ENCODE measurements at regions of chr12 and their contacts with region 1.

Region 1: DNA sequence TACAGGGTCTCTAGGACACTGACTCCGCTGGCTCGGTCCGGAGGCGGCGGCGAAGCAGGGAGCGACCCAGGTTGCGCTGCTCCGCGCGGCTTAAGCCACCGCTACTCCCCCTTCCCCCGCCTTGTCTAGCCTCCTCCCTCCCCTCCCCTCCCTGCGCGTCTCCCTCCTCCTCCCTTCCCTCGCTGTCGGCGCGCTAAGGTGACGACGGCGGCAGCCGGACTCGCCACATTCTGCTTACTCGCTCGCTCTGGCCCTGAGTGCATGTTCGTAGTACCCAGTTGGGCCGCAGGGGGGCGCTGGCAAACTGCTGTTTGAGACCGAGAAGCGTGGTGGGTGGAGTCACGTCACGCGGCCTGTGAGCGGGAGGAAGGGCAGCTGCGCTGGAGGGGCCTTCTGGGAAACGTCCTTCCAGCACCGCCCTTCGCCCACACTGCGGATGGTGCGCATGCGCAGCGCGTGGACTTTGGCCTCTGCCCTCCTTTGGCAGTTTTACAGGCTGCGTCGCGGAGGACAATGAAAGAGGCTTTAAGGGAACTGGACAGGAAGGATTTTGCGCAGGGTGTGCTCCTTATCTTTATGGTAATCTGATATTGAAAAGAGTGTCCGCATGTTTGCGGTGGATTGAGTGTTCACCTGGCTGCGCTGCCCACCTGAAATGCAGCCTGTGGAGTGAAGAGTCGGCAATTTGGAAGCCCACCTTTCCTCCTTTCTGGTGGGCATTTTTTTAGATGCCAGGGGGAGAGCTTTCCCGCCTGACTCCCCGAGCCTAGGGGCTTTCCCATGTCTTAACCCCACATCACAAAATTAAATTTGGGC is at the start of gene SCAF11:
- DNase-seq: peak; percentile 100
- H3K4me3 ChIP-seq: peak within 1 kb of the TSS; percentile 73 to 79
- H3K27ac ChIP-seq: peak within 1 kb of the TSS; percentile 98 to 99
- H3K4me1 ChIP-seq: peaks cover 7% of the 10 kb centered on the region
- H3K27me3 ChIP-seq: no peaks in the 10 kb centered on the region
- CTCF ChIP-seq: peak; percentile 98 to 100 (median 100)
- POLR2A ChIP-seq: peak; percentile 55
- total RNA-seq, gene SCAF11: 144 to 171 TPM

Region 2: DNA sequence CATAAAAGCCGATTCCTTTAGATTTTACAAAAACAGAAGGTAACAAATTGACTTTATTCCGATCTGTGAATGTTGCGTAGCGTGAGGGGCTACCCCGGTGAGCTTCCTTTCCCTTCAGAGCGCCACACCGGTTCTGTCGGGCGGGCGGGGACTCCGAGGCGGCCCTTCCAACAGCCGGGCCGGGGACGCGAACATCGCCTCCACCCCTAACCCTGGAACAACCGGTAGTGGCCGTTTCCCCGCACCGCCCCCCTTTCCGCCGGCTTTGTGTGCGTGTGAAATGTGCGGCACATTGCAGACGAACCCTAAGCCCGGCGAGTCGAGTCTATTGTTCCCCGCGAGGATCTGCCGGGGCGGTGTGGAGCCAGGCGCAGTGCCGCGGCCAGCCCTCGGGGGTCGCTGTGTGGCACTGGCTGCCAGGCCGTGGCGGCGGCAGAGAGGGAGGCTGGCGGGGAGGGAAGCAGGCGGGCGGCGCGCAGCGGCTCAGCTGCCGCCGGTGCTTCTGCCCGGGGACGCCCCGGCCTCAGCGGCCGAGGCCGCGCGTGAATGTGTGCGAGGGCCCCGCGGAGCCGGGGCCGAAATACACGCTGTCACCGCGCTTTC is 261.9 kb before region 1 on chr12:
- intact Hi-C with region 1: loop called (anchors 2 kb)
- DNase-seq: peak; percentile 94
- H3K4me3 ChIP-seq: peak overlapping the region; percentile 80 to 87
- H3K27ac ChIP-seq: peak overlapping the region; percentile 99 to 100
- H3K4me1 ChIP-seq: no peaks in the 10 kb centered on the region
- H3K27me3 ChIP-seq: no peaks in the 10 kb centered on the region
- CTCF ChIP-seq: peak; percentile 85 to 98 (median 96)
- POLR2A ChIP-seq: peak; percentile 83

Region 3: DNA sequence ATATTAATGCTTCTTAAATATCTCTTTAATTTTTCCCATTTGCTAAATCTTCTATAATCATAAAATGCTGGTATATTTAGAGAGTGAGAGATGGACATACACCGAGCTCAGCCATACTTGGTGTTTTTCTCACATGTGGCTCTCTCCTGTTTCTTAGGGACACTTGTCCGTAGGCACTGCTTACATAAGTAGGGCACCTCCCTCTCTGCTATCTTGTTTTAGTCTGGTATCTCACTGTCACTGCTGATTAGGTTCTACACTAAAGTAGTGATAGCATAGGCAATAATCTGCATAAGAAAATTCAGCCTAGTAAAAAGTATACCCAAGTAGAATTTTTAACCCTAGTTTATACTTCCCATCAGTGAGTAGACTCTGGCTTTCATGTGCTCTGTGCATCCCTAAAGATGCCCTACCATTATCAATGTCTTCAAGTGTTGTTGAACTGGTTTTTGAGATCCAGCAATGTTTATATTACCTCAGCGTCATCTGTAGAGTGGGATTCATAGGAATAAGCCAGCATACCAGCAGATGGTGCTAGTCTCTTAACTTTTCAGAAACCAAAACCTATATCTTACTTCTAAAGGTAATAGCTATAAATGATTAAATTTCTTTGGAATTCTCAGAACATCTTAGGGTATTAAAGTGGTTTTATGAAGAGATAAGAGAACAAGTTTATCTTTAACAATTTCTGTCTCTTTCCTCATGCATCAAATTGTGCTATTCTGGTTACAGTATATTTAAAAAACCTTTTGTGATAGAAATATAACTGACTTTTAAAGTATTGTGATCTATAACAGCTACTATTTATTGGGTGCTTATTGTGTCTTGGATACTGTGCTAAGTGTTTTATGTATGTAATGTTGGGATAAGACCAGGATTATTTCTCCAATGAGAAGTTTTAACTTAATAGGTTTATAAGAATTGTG is 228.2 kb before region 1 on chr12:
- intact Hi-C with region 1: loop called (anchors 10 kb)
- DNase-seq: peak; percentile 23
- H3K4me3 ChIP-seq: no peak overlapping the region
- H3K27ac ChIP-seq: no peak overlapping the region
- H3K4me1 ChIP-seq: no peaks in the 10 kb centered on the region
- H3K27me3 ChIP-seq: no peaks in the 10 kb centered on the region
- CTCF ChIP-seq: peak; percentile 13 to 63 (median 52)
- POLR2A ChIP-seq: no peak

Region 4: GRCh38 chr12:46675736-46676135 is 685.1 kb after region 1 on chr12:
- intact Hi-C with region 1: loop called (anchors 10 kb)
- DNase-seq: no peak
- H3K4me3 ChIP-seq: no peak overlapping the region
- H3K27ac ChIP-seq: no peak overlapping the region
- H3K4me1 ChIP-seq: no peaks in the 10 kb centered on the region
- H3K27me3 ChIP-seq: no peaks in the 10 kb centered on the region
- CTCF ChIP-seq: peak; percentile 19 to 54 (median 52)
- POLR2A ChIP-seq: no peak

Measured in prostate gland (tissue), 2 donors.